GM10248 (cell line): ENCODE measurements at regions of chr3 and their contacts with region 1.

Region 1: GRCh38 chr3:189512039-189512438 is 119.2 kb upstream of the TP63 start:
- DNase-seq: peak; percentile 35
- CTCF ChIP-seq: peak; percentile 14

Region 2: GRCh38 chr3:189490749-189491148 is 21.3 kb before region 1 on chr3:
- CTCF ChIA-PET with region 1: interaction called, 14 read pairs
- POLR2A ChIA-PET with region 1: no interaction called
- DNase-seq: no peak
- CTCF ChIP-seq: no peak

Region 3: DNA sequence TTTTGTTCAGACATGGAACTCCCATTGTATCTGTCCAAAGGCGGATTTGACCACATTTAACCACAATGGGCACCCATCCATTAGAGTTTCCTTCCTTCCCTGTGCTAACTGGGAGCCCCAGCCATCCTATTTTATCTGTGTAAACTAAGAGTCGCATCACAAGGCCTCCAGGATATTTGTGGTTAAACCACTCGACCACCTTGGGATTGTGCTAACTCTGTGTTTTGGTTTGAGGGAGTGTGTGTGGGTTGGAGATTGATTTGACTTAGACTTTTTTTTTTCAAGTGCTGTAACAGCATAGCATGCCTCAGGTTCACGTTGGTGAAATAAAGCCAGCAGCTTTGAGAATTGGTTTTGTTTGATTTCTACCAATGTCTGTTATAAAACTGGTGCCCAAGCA is 18.8 kb after region 1 on chr3:
- CTCF ChIA-PET with region 1: interaction called, 10 read pairs
- POLR2A ChIA-PET with region 1: no interaction called
- DNase-seq: no peak
- CTCF ChIP-seq: no peak

Region 4: GRCh38 chr3:189685854-189686253 is 173.8 kb after region 1 on chr3:
- CTCF ChIA-PET with region 1: interaction called, 10 read pairs
- POLR2A ChIA-PET with region 1: no interaction called
- DNase-seq: no peak
- CTCF ChIP-seq: no peak